A549 (cell line): ENCODE measurements at regions of chr17 and their contacts with region 1.

Region 1: DNA sequence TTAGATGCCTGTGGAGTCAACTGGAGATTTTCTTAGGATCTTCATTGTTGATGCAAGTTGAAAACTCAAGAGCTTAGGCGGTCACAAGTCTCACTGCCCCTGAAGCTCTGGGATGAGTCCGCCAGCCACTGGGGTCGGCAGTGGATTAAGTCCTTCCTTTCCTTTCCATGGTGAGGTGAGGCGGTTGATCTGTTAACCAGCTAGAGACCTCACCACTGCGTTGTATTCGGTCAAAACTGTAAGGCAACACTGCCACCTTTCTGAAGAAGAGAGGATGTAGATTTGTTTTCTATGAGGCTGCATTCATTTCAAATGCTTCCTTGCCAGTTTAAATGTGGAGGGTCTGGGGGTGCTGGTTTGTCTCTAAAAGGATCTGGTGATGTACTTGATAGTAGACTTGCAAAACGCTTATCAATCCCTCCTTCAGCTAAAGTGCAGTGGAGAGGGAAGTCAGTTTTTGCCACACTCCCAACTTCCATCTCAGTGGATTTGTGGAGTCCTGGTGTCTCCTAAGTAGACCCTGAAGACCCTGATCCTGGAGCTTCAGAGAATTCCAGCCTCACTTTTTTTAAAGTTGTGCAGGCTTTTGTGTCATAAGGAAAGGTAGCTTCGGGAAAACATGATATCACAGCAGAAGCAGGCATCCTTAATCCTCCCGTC is 1.7 kb downstream of the MYOCD start:
- DNase-seq: peak; percentile 70 to 90
- ATAC-seq: peak; percentile 75 to 80
- H3K4me3 ChIP-seq: peak overlapping the region; percentile 60
- H3K27ac ChIP-seq: peak overlapping the region; percentile 80 to 81
- H3K4me1 ChIP-seq: peaks cover 29% of the 10 kb centered on the region; the same call in 2 of the 3 replicates
- CTCF ChIP-seq: peak; percentile 92
- EP300 ChIP-seq: no peak
- POLR2A ChIP-seq: no peak
- RAD21 ChIP-seq: peak; percentile 98

Region 2: DNA sequence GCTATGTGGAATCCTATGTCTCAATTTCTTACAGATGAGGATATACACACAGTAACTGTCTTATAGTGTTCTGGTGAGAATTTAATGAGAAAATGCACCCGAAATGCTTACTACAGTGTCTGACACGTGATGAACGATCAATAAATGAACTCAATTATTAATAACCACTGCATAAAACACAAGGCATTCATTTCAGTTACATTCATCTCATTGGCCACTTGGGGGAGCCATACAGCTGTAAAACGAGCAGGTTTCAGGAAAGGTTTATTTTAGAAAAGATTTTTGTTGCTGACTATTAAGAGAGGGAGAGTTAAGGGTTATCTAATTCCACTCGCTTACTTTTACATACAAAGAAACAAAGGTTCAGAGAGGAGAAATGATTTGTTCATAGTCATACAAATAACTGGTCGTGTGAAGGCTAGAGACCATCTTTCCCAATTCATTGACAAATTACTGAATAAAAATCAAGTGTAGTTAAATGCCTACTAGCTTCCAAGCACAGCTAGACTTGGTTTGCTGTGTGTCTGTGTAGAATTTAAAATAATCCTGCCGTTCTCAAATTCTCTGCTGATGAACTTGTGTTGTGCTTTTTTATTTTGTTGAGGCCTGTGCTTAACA is 486.7 kb before region 1 on chr17:
- CTCF ChIA-PET with region 1: interaction called, 30 read pairs
- POLR2A ChIA-PET with region 1: no interaction called
- DNase-seq: peak; percentile 27 to 74
- ATAC-seq: peak; percentile 67 to 89
- H3K4me3 ChIP-seq: no peak overlapping the region
- H3K27ac ChIP-seq: peak overlapping the region; percentile 15 to 16; a peak in 3 of 6 replicates
- H3K4me1 ChIP-seq: peaks cover 4% of the 10 kb centered on the region; the same call in 2 of the 3 replicates
- CTCF ChIP-seq: peak; percentile 99
- EP300 ChIP-seq: no peak
- POLR2A ChIP-seq: no peak
- RAD21 ChIP-seq: peak; percentile 95 to 98

Region 3: DNA sequence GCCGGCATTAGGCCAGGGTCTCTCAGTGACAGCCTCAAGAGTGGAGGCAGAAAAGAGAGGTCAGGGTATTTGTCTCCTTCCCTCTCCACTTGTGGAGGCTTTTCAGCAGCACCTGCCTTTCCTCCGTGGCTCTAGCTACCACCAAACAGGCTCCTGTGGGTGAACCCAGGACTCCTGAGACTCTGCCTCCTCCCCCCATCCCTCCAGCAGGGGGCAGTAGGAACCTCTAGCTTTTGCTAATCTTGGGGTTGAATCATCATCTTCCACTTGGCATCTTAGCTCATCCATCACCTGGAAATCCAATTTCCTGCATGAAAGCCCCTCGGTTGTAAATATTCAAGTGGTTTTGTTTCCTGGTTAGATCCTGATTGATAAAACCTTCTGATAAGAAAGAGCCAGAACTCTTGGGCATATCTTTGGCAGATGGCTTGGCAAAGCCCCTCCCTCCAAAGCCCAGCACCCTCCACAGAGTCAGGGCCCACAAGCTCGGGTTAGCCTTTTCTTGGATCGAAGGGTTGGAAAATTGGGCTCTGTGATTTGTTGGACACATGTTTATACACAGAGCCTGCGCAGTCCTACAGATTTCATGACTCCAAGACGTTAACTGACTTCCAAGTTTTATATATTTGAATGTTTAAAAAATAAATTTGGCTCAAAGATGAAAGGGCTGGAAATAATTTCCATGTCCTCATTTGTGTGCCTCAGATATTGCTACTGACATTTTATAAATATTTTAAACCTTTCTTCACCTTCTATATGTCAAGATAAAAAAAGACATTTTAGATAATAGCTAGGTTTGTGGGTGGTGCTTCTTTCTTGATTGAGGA is 324.6 kb before region 1 on chr17:
- CTCF ChIA-PET with region 1: interaction called, 10 read pairs
- POLR2A ChIA-PET with region 1: no interaction called
- DNase-seq: peak; percentile 22 to 65
- ATAC-seq: peak; percentile 47 to 90; a peak in 3 of 6 replicates
- H3K4me3 ChIP-seq: no peak overlapping the region
- H3K27ac ChIP-seq: no peak overlapping the region
- H3K4me1 ChIP-seq: no peaks in the 10 kb centered on the region
- CTCF ChIP-seq: peak; percentile 48
- EP300 ChIP-seq: no peak
- POLR2A ChIP-seq: no peak
- RAD21 ChIP-seq: peak; percentile 57 to 69

Region 4: GRCh38 chr17:12485361-12485906 is 182.0 kb before region 1 on chr17:
- CTCF ChIA-PET with region 1: no interaction called
- POLR2A ChIA-PET with region 1: no interaction called
- DNase-seq: no peak
- ATAC-seq: no peak
- H3K4me3 ChIP-seq: no peak overlapping the region
- H3K27ac ChIP-seq: peak overlapping the region in 1 of 2 experiments; percentile 13; a peak in 1 of 6 replicates
- H3K4me1 ChIP-seq: peaks cover 6% of the 10 kb centered on the region; the same call in 2 of the 3 replicates
- CTCF ChIP-seq: no peak
- EP300 ChIP-seq: no peak
- POLR2A ChIP-seq: no peak
- RAD21 ChIP-seq: no peak

Region 5: GRCh38 chr17:12522743-12523183 is 144.7 kb before region 1 on chr17:
- CTCF ChIA-PET with region 1: interaction called, 11 read pairs
- POLR2A ChIA-PET with region 1: no interaction called
- DNase-seq: peak; percentile 20 to 92
- ATAC-seq: peak; percentile 92 to 94
- H3K4me3 ChIP-seq: peak overlapping the region; percentile 16; the same call in 1 of the 3 replicates
- H3K27ac ChIP-seq: peak overlapping the region; percentile 68 to 82
- H3K4me1 ChIP-seq: peaks cover 26% of the 10 kb centered on the region
- CTCF ChIP-seq: no peak
- EP300 ChIP-seq: peak in 1 of 2 experiments; percentile 76; a peak in 4 of 5 replicates
- POLR2A ChIP-seq: no peak
- RAD21 ChIP-seq: peak in 1 of 2 experiments; percentile 52; a peak in 3 of 5 replicates

Region 6: GRCh38 chr17:12656354-12656753 is 11.1 kb before region 1 on chr17:
- CTCF ChIA-PET with region 1: interaction called, 13 read pairs
- POLR2A ChIA-PET with region 1: no interaction called
- DNase-seq: no peak
- ATAC-seq: no peak
- H3K4me3 ChIP-seq: no peak overlapping the region
- H3K27ac ChIP-seq: peak overlapping the region in 1 of 2 experiments; percentile 39; a peak in 2 of 6 replicates
- H3K4me1 ChIP-seq: peaks cover 30% of the 10 kb centered on the region
- CTCF ChIP-seq: no peak
- EP300 ChIP-seq: no peak
- POLR2A ChIP-seq: no peak
- RAD21 ChIP-seq: no peak

Region 7: GRCh38 chr17:12789075-12789776 is 121.8 kb after region 1 on chr17 and contains the start of gene ARHGAP44:
- CTCF ChIA-PET with region 1: no interaction called
- POLR2A ChIA-PET with region 1: no interaction called
- DNase-seq: peak; percentile 64 to 77
- ATAC-seq: peak; percentile 97 to 98
- H3K4me3 ChIP-seq: peak within 1 kb of the TSS; percentile 74
- H3K27ac ChIP-seq: peak within 1 kb of the TSS; percentile 72 to 86
- H3K4me1 ChIP-seq: 0 out of 3 replicates have a peak, but pooled peaks cover 3% of the 10 kb centered on the region
- CTCF ChIP-seq: no peak
- EP300 ChIP-seq: no peak
- POLR2A ChIP-seq: peak; percentile 73
- RAD21 ChIP-seq: no peak; a peak in 1 of 5 replicates
- polyA plus RNA-seq, gene ARHGAP44: 4.1 and 4.5 TPM in 2 replicates

Region 8: GRCh38 chr17:12866244-12866643 is 198.8 kb after region 1 on chr17:
- CTCF ChIA-PET with region 1: no interaction called
- POLR2A ChIA-PET with region 1: no interaction called
- DNase-seq: no peak
- ATAC-seq: no peak
- H3K4me3 ChIP-seq: no peak overlapping the region
- H3K27ac ChIP-seq: no peak overlapping the region
- H3K4me1 ChIP-seq: no peaks in the 10 kb centered on the region
- CTCF ChIP-seq: no peak
- EP300 ChIP-seq: no peak
- POLR2A ChIP-seq: no peak
- RAD21 ChIP-seq: no peak

Region 9: GRCh38 chr17:13002766-13003451 is 335.5 kb after region 1 on chr17:
- CTCF ChIA-PET with region 1: interaction called, 10 read pairs
- POLR2A ChIA-PET with region 1: no interaction called
- DNase-seq: peak; percentile 74 to 80
- ATAC-seq: peak; percentile 91 to 96
- H3K4me3 ChIP-seq: no peak overlapping the region
- H3K27ac ChIP-seq: no peak overlapping the region
- H3K4me1 ChIP-seq: no peaks in the 10 kb centered on the region
- CTCF ChIP-seq: peak; percentile 96
- EP300 ChIP-seq: no peak
- POLR2A ChIP-seq: no peak
- RAD21 ChIP-seq: peak; percentile 88